ENCODE measurements at regions of chr10 and their contacts with region 1.

Region 1: DNA sequence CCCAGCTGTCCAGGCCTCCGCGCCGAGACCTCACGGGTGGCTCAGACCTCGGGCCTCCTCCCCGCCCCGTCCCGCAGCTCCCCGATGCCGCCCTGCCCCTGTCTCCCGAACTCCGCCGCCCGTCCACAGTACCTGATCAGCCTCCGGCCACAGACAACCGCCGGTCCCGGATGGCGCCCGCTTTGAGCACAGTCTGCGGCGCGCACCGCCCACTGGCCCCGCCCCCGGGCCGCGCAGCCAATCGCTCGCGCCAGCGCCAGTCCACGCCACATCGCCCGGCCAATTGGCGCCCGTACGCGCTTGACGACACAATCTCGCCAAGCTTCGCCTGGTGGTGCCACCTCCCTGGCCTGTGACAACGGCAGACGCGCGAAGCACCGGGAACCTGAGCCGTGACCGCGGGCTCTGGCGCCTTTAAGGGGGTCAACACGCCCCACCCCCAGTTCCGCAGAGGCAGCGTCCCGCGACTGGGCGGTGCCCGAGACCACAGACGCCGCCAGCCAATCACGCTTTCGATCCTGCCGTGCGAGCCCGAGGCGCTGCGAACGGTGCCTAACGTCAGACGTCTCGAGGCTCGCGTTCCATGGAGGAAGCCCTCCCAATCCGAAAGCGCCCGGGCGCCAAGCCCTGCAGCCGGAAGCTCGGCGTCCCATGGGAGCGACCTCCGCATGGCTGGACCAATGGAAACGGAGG is at the start of gene IDI1:
- DNase-seq: peak; percentile 97
- CTCF ChIP-seq: no peak

Region 2: DNA sequence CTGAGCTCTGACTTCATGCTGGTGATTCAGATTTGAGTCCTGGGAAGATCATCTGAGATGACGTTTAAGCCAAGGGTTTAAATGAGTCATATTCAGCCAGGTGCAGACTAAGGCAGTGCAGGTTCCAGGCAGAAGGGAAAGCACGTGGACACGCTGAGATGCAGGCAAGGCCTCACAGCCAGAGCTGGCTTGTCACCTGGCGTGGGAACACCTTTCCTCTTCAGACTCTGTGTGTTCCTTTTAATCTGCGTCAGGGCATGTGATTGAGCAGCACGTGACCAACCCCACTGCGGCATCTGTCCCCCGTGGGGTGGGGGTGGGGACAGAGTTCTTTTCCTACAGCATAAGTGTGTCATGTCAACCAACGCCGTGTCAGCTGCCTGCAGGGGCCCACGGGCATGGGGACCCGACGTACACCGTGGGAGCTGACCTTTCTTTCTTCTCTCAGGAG is 12.5 kb before region 1 on chr10:
- CTCF ChIA-PET with region 1: interaction called, 12 read pairs
- POLR2A ChIA-PET with region 1: interaction called, 33 read pairs
- DNase-seq: peak; percentile 71
- CTCF ChIP-seq: no peak